PC-3 (cell line): ENCODE measurements at regions of chrX and their contacts with region 1.

Region 1: DNA sequence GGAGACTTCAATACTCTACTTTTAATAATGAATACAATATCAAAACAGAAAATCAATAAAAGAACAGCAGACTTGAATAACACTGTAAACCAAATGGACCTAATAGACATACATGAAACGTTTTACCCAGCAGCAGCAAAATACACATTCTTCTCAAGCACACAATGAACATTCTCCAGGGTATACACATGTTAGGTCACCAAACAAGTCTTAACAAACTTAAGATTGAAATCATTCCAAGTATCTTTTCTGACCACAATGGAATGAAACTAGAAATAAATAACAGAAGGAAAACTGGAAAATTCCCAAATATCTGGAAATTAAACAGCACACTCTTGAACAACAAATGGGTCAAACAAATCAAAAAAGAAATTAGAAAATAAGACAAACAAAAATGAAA is 145.0 kb upstream of the CT83 start:
- DNase-seq: no peak
- ATAC-seq: no peak
- H3K4me3 ChIP-seq: no peak overlapping the region
- H3K27ac ChIP-seq: no peak overlapping the region
- H3K4me1 ChIP-seq: no peaks in the 10 kb centered on the region
- H3K27me3 ChIP-seq: no peaks in the 10 kb centered on the region
- CTCF ChIP-seq: no peak

Region 2: GRCh38 chrX:116357329-116357728 is 250.4 kb before region 1 on chrX:
- CTCF ChIA-PET with region 1: no interaction called
- POLR2A ChIA-PET with region 1: no interaction called
- intact Hi-C with region 1: no loop called
- DNase-seq: no peak
- ATAC-seq: no peak
- H3K4me3 ChIP-seq: no peak overlapping the region
- H3K27ac ChIP-seq: no peak overlapping the region
- H3K4me1 ChIP-seq: no peaks in the 10 kb centered on the region; the same call in 1 of the 2 replicates
- H3K27me3 ChIP-seq: no peaks in the 10 kb centered on the region
- CTCF ChIP-seq: no peak

Region 3: GRCh38 chrX:116628456-116628855 is 20.7 kb after region 1 on chrX:
- CTCF ChIA-PET with region 1: no interaction called
- POLR2A ChIA-PET with region 1: no interaction called
- intact Hi-C with region 1: loop called (anchors 1 kb)
- DNase-seq: no peak
- ATAC-seq: no peak
- H3K4me3 ChIP-seq: no peak overlapping the region
- H3K27ac ChIP-seq: no peak overlapping the region
- H3K4me1 ChIP-seq: no peaks in the 10 kb centered on the region
- H3K27me3 ChIP-seq: no peaks in the 10 kb centered on the region
- CTCF ChIP-seq: no peak

Region 4: DNA sequence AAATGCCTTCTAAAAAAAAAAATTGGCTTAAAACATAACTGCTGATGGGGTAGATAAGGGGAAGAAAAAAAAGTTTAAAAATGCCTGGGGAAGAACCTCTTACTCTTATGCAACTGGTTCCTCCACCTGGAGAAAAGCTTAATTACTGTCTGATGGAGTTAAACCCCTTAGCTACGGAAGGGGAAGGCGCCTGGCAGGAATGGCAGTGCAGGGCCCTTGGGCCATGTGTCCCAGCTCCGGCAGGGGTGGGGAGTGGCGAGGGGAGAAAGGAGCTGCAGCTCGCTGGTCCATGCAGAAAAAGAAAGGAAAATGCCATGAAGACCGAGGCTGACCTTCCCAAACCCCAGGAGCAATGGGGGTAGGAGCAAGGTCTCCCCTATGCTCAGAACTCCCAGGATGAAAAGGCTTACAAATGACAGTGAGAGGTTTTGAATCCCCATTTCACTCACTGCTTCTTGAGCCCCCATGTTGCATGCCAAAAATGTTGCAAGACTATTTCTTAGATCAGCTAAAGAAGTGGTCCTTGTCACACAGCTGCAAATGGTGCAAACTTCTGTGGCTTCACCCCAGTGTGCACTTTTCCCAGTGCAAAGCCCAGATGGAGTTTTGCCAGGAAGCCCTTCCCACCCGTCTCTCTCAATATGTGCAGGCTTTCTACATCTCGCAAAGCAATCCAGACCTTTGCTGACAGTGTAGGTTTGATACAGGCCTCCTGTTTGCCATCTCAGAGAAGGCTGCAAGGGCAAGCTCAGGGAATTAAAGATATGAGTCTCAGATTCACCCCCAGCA is 59.8 kb after region 1 on chrX:
- CTCF ChIA-PET with region 1: no interaction called
- POLR2A ChIA-PET with region 1: no interaction called
- intact Hi-C with region 1: no loop called
- DNase-seq: no peak
- ATAC-seq: no peak
- H3K4me3 ChIP-seq: no peak overlapping the region
- H3K27ac ChIP-seq: no peak overlapping the region
- H3K4me1 ChIP-seq: no peaks in the 10 kb centered on the region
- H3K27me3 ChIP-seq: no peaks in the 10 kb centered on the region
- CTCF ChIP-seq: no peak